ENCODE measurements at regions of chr14 and their contacts with region 1.

Region 1: DNA sequence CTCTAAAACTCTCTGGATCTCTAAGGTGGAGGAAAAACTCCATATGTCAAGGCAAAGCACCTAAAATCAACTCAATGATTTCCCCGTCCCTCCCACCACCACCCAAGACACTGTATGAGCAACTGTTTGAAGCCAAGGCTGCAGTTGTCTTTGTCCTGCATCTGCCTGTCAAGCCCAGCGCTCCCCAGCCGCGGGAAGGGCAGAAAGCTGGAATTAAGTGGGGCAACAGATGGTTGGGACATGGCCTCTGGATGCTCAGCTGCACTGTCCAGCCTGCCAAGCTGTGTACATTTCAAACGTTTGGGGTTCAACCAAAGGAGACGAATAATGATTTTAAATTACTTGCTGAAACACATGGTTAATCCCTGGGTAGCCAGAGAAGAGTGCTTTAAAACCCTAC is 42.2 kb upstream of the PTGR2 start:
- DNase-seq: no peak
- ATAC-seq: no peak
- H3K4me3 Mint-ChIP-seq: no peak overlapping the region
- H3K27ac Mint-ChIP-seq: no peak overlapping the region
- H3K4me1 Mint-ChIP-seq: peaks cover 13% of the 10 kb centered on the region
- H3K27me3 Mint-ChIP-seq: peaks cover 6% of the 10 kb centered on the region

Region 2: GRCh38 chr14:72479461-72479931 is 1329.9 kb before region 1 on chr14:
- CTCF ChIA-PET with region 1: no interaction called
- POLR2A ChIA-PET with region 1: no interaction called
- intact Hi-C with region 1: no loop called
- DNase-seq: no peak
- ATAC-seq: no peak
- H3K4me3 Mint-ChIP-seq: no peak overlapping the region
- H3K27ac Mint-ChIP-seq: no peak overlapping the region
- H3K4me1 Mint-ChIP-seq: peaks cover 41% of the 10 kb centered on the region
- H3K27me3 Mint-ChIP-seq: peaks cover 14% of the 10 kb centered on the region

Region 3: GRCh38 chr14:73403181-73403752 is 406.1 kb before region 1 on chr14:
- CTCF ChIA-PET with region 1: no interaction called
- POLR2A ChIA-PET with region 1: interaction called, 12 read pairs
- intact Hi-C with region 1: no loop called
- DNase-seq: no peak
- ATAC-seq: no peak
- H3K4me3 Mint-ChIP-seq: no peak overlapping the region
- H3K27ac Mint-ChIP-seq: no peak overlapping the region
- H3K4me1 Mint-ChIP-seq: peaks cover 3% of the 10 kb centered on the region
- H3K27me3 Mint-ChIP-seq: no peaks in the 10 kb centered on the region

Region 4: DNA sequence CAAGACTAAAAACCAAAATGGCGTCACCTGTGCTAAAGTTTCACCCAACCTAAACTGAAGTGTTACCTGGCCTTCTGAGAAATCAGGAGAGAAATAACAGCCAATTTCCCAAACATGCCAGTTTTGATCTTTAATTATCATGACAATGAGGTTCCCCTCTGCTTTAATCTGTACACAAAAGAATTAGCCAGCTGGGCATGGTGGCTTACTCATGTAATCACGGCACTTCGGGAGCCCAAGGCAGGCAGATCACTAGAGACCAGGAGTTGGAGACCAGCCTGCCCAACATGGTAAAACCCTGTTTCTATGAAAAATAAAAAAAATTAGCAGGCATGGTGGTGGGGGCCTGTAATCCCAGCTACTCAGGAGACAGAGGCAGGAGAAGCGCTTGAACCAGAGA is 255.5 kb before region 1 on chr14:
- CTCF ChIA-PET with region 1: no interaction called
- POLR2A ChIA-PET with region 1: no interaction called
- intact Hi-C with region 1: no loop called
- DNase-seq: no peak
- ATAC-seq: no peak
- H3K4me3 Mint-ChIP-seq: no peak overlapping the region
- H3K27ac Mint-ChIP-seq: no peak overlapping the region
- H3K4me1 Mint-ChIP-seq: no peaks in the 10 kb centered on the region
- H3K27me3 Mint-ChIP-seq: no peaks in the 10 kb centered on the region

Region 5: DNA sequence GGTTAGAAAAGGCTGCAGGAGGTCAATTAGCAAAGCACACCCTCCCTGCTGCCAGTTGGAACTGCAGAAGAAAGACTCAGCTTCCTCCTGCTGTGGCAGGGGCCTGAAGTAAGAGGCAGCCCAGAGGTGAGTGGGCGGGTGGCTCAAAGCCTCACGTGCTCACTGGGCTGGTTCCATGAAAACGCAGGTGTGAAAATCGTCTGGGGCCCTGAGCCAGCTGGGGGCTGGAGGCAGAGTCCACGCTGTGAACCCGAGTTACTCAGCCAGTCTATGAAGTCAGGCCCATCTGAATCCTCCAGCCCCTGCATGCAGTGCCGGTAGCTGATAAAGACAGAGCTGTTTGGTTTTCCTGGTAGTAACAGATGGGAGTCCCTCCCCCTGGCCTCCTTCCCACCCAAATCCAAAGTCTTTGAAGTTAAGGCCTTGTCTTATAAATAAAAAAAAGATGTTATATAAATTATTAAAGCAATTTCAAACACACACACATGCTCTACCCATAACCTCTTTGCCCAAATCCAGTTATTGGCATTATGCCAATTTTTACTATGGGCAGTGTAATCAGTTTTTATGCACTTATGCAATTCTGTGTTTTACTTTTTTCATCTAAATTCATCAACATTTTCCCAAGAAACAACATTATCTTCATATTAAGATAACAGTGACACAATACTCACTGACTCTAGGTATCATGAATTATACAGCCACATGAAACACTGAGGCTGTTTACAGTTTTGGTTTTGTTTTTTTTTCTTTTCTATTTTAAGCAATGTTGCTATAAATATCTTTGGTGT is 37.3 kb before region 1 on chr14:
- CTCF ChIA-PET with region 1: no interaction called
- POLR2A ChIA-PET with region 1: no interaction called
- intact Hi-C with region 1: no loop called
- DNase-seq: peak; percentile 90
- ATAC-seq: peak; percentile 80
- H3K4me3 Mint-ChIP-seq: peak overlapping the region; percentile 12
- H3K27ac Mint-ChIP-seq: peak overlapping the region; percentile 89
- H3K4me1 Mint-ChIP-seq: peaks cover 73% of the 10 kb centered on the region
- H3K27me3 Mint-ChIP-seq: no peaks in the 10 kb centered on the region

Region 6: DNA sequence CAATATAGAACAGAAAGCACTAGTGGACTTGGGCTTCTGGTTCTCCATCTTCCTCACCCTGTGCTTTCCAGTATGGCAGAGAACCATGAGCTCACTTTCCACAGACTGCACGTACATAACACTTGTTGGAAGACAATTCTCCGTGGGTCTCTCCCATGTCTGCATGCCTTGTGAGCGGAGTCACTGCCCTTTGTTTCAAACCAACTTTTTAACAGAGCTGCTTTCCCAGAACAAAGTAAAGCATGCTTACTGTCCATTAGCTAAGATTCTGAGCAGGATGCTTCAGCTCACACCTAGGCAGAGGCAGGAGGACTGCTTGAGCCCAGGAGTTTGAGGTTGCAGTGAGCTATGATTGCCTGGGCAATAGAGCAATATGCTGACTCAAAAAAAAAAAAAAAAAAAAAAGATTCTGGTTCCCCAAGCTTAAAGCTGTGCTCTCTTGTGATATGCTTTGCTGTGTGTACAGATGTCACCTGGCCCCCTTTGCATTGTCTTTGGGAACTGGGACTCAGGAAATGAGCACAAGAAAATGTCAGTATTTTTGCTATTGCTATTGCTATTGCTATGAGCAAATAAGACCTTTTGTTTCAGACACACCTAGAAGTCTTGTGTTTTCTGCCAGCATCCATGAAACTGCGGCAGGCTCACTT is 12.4 kb before region 1 on chr14:
- CTCF ChIA-PET with region 1: interaction called, 3 read pairs
- POLR2A ChIA-PET with region 1: interaction called, 11 read pairs
- intact Hi-C with region 1: no loop called
- DNase-seq: no peak
- ATAC-seq: no peak
- H3K4me3 Mint-ChIP-seq: no peak overlapping the region
- H3K27ac Mint-ChIP-seq: no peak overlapping the region
- H3K4me1 Mint-ChIP-seq: no peaks in the 10 kb centered on the region
- H3K27me3 Mint-ChIP-seq: no peaks in the 10 kb centered on the region

Region 7: GRCh38 chr14:73977600-73978295 is 168.4 kb after region 1 on chr14:
- CTCF ChIA-PET with region 1: no interaction called
- POLR2A ChIA-PET with region 1: no interaction called
- intact Hi-C with region 1: no loop called
- DNase-seq: no peak
- ATAC-seq: no peak
- H3K4me3 Mint-ChIP-seq: no peak overlapping the region
- H3K27ac Mint-ChIP-seq: no peak overlapping the region
- H3K4me1 Mint-ChIP-seq: no peaks in the 10 kb centered on the region
- H3K27me3 Mint-ChIP-seq: no peaks in the 10 kb centered on the region

Measured in activated CD4-positive, alpha-beta T cell treated with anti-CD3 and anti-CD28 coated beads for 36 hours (primary cell).